PC-3 (cell line): ENCODE measurements at regions of chr13 and their contacts with region 1.

Region 1: GRCh38 chr13:109743706-109744453 is 42.5 kb downstream of the IRS2 start:
- DNase-seq: peak; percentile 87
- ATAC-seq: peak; percentile 94
- H3K4me3 ChIP-seq: peak overlapping the region; percentile 25; the same call in 1 of the 2 replicates
- H3K27ac ChIP-seq: peak overlapping the region; percentile 47
- H3K4me1 ChIP-seq: peaks cover 21% of the 10 kb centered on the region
- H3K27me3 ChIP-seq: no peaks in the 10 kb centered on the region
- CTCF ChIP-seq: no peak

Region 2: GRCh38 chr13:108961542-108962125 is 782.2 kb before region 1 on chr13:
- CTCF ChIA-PET with region 1: interaction called, 3 read pairs
- POLR2A ChIA-PET with region 1: no interaction called
- intact Hi-C with region 1: loop called (anchors 5 kb)
- DNase-seq: peak; percentile 67
- ATAC-seq: peak; percentile 48
- H3K4me3 ChIP-seq: no peak overlapping the region
- H3K27ac ChIP-seq: no peak overlapping the region
- H3K4me1 ChIP-seq: 0 out of 2 replicates have a peak, but pooled peaks cover 6% of the 10 kb centered on the region
- H3K27me3 ChIP-seq: no peaks in the 10 kb centered on the region
- CTCF ChIP-seq: peak; percentile 83

Region 3: GRCh38 chr13:109494925-109495345 is 248.9 kb before region 1 on chr13:
- CTCF ChIA-PET with region 1: no interaction called
- POLR2A ChIA-PET with region 1: no interaction called
- intact Hi-C with region 1: loop called (anchors 10 kb)
- DNase-seq: peak; percentile 74
- ATAC-seq: peak; percentile 86
- H3K4me3 ChIP-seq: peak overlapping the region; percentile 48
- H3K27ac ChIP-seq: peak overlapping the region; percentile 89
- H3K4me1 ChIP-seq: peaks cover 38% of the 10 kb centered on the region
- H3K27me3 ChIP-seq: no peaks in the 10 kb centered on the region
- CTCF ChIP-seq: no peak

Region 4: GRCh38 chr13:109569958-109570711 is 173.7 kb before region 1 on chr13:
- CTCF ChIA-PET with region 1: interaction called, 11 read pairs
- POLR2A ChIA-PET with region 1: no interaction called
- intact Hi-C with region 1: no loop called
- DNase-seq: no peak
- ATAC-seq: no peak
- H3K4me3 ChIP-seq: no peak overlapping the region
- H3K27ac ChIP-seq: no peak overlapping the region
- H3K4me1 ChIP-seq: no peaks in the 10 kb centered on the region
- H3K27me3 ChIP-seq: no peaks in the 10 kb centered on the region
- CTCF ChIP-seq: no peak

Region 5: GRCh38 chr13:109610517-109610916 is 133.4 kb before region 1 on chr13:
- CTCF ChIA-PET with region 1: no interaction called
- POLR2A ChIA-PET with region 1: no interaction called
- intact Hi-C with region 1: loop called (anchors 10 kb)
- DNase-seq: peak; percentile 25
- ATAC-seq: peak; percentile 61; the same call in 1 of the 2 replicates
- H3K4me3 ChIP-seq: no peak overlapping the region
- H3K27ac ChIP-seq: no peak overlapping the region
- H3K4me1 ChIP-seq: peaks cover 14% of the 10 kb centered on the region; the same call in 1 of the 2 replicates
- H3K27me3 ChIP-seq: no peaks in the 10 kb centered on the region
- CTCF ChIP-seq: peak; percentile 56